ENCODE measurements at regions of chr5 and their contacts with region 1.

Region 1: GRCh38 chr5:149561848-149562247 is 10.6 kb upstream of the CSNK1A1 start:
- DNase-seq: no peak
- H3K4me3 ChIP-seq: peak overlapping the region; percentile 39
- H3K27ac ChIP-seq: peak overlapping the region; percentile 86
- H3K4me1 ChIP-seq: peaks cover 40% of the 10 kb centered on the region
- H3K27me3 ChIP-seq: no peaks in the 10 kb centered on the region
- CTCF ChIP-seq: no peak

Region 2: DNA sequence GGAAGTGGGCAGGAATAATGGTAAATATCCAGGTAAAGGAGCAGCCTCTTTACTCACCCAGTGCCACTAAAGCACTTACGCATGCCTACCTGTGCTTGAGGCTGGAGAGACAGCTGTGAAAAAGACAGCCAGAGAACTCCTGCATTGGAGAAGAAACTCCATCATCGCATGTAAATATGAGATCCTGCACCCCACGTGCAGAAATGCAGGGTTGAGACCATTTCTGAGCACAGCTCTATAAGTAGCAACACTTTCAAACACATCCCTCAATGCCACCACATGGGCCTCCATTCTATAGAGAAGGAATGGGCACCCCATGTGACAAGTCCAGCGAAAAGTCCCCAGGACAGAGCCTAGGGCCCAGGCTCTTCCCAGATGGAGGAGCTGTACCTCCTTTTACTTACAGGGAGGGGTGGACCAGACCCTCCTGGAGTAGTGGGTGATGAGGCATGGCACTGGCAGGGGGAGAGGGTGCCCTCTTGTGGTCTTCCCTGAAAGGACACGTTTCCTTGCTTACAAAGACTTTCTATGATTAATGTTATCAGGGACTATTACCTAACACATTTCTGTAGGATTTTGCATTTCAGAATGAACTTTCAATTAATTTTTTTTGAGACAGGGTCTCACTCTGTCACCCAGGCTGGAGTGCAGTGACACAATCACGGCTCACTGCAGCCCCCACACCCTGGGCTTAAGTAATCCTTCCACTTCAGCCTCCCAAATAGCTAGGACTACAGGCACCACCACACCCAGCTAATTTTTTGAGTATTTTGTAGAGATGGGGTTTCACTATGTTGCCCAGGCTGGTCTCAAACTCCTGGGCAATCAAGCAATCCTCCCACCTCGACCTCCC is 127.5 kb before region 1 on chr5:
- intact Hi-C with region 1: loop called (anchors 5 kb)
- DNase-seq: no peak
- H3K4me3 ChIP-seq: no peak overlapping the region
- H3K27ac ChIP-seq: peak overlapping the region; percentile 95
- H3K4me1 ChIP-seq: peaks cover 49% of the 10 kb centered on the region
- H3K27me3 ChIP-seq: no peaks in the 10 kb centered on the region
- CTCF ChIP-seq: peak; percentile 94

Region 3: DNA sequence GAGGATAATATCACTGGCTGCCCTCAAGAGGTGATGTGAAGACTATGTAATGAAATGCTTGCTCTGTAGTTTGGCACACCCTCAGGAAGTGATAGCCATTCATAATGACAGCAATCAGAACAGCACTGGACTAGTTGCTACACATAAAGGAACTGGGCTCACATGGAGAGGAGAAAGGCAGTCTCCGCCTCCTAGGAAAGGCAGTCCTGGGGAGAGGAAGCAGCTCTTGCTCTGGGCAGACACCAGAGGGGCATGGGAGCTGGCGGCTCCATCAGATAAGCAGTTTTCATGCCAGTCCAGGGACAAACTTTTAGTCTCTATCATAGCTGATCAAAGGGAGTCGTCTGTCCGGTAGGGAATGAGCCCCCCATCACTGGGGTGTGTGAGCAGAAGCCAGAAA is 66.4 kb after region 1 on chr5:
- intact Hi-C with region 1: no loop called
- DNase-seq: no peak
- H3K4me3 ChIP-seq: no peak overlapping the region
- H3K27ac ChIP-seq: no peak overlapping the region
- H3K4me1 ChIP-seq: peaks cover 12% of the 10 kb centered on the region
- H3K27me3 ChIP-seq: no peaks in the 10 kb centered on the region
- CTCF ChIP-seq: no peak